Dendritic cell treated with granulocyte-macrophage colony-stimulating factor and Interleukin-4, amounts not matched to agents 40 ng/mL and 50 ng/mL, for 4 days (primary cell): ENCODE measurements at regions of chr19 and their contacts with region 1.

Region 1: DNA sequence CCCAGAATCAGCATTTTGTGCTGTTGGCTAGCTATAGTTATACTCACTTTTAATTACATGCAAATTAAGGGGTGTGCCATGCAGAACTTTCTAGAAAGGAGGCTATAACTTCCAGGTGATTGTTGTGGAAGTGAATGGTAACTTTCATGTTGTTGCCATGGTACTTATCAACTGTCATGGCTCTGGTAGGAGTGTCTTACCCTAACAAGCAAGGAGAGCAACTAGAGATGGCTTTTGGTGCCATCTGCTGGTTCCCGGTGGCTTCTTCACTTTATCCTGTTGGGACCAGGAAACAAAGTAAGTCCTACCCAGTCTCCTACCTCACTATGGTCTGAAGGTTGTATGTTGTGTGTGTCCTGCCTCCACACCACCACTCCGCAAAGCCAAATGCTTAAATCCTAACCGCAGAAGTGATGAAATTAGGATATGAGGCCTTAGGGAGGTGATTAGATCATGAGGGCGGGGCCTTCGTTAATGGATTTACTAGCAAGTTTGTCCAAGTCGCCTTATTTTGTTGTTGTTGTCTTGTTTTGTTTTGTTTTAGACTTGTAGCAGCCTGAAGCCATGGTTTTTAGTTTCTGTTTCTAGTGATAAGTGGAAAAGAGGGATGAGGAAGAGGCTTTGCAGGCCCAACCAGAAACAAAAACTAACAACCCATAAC is 22.6 kb downstream of the FBXL12 start:
- H3K4me3 Mint-ChIP-seq: no peak overlapping the region
- H3K27ac Mint-ChIP-seq: peak overlapping the region; percentile 72
- H3K4me1 Mint-ChIP-seq: peaks cover 17% of the 10 kb centered on the region
- H3K27me3 Mint-ChIP-seq: no peaks in the 10 kb centered on the region

Region 2: GRCh38 chr19:9140159-9140874 is 655.9 kb before region 1 on chr19 and contains the start of gene ZNF317:
- intact Hi-C with region 1: loop called (anchors 5 kb)
- H3K4me3 Mint-ChIP-seq: peak within 1 kb of the TSS; percentile 98
- H3K27ac Mint-ChIP-seq: peak within 1 kb of the TSS; percentile 92
- H3K4me1 Mint-ChIP-seq: peaks cover 38% of the 10 kb centered on the region
- H3K27me3 Mint-ChIP-seq: peaks cover 5% of the 10 kb centered on the region

Region 3: GRCh38 chr19:9205501-9206113 is 590.6 kb before region 1 on chr19:
- intact Hi-C with region 1: loop called (anchors 10 kb)
- H3K4me3 Mint-ChIP-seq: peak overlapping the region; percentile 46
- H3K27ac Mint-ChIP-seq: peak overlapping the region; percentile 22
- H3K4me1 Mint-ChIP-seq: peaks cover 18% of the 10 kb centered on the region
- H3K27me3 Mint-ChIP-seq: peaks cover 33% of the 10 kb centered on the region

Region 4: GRCh38 chr19:9309139-9309973 is 486.9 kb before region 1 on chr19 and contains the start of gene ZNF699:
- intact Hi-C with region 1: loop called (anchors 5 kb)
- H3K4me3 Mint-ChIP-seq: peak within 1 kb of the TSS; percentile 92
- H3K27ac Mint-ChIP-seq: peak within 1 kb of the TSS; percentile 98
- H3K4me1 Mint-ChIP-seq: peaks cover 22% of the 10 kb centered on the region
- H3K27me3 Mint-ChIP-seq: peaks cover 2% of the 10 kb centered on the region

Region 5: GRCh38 chr19:9584073-9584833 is 212.0 kb before region 1 on chr19 and contains the start of gene ZNF121:
- intact Hi-C with region 1: loop called (anchors 2 kb)
- H3K4me3 Mint-ChIP-seq: peak within 1 kb of the TSS; percentile 93
- H3K27ac Mint-ChIP-seq: peak within 1 kb of the TSS; percentile 98
- H3K4me1 Mint-ChIP-seq: peaks cover 18% of the 10 kb centered on the region
- H3K27me3 Mint-ChIP-seq: peaks cover 11% of the 10 kb centered on the region

Region 6: GRCh38 chr19:9785367-9786331 is 10.6 kb before region 1 on chr19:
- intact Hi-C with region 1: loop called (anchors 1 kb)
- H3K4me3 Mint-ChIP-seq: peak overlapping the region; percentile 80
- H3K27ac Mint-ChIP-seq: peak overlapping the region; percentile 96
- H3K4me1 Mint-ChIP-seq: peaks cover 40% of the 10 kb centered on the region
- H3K27me3 Mint-ChIP-seq: no peaks in the 10 kb centered on the region

Region 7: GRCh38 chr19:9818734-9819589 is 22.7 kb after region 1 on chr19 and contains the start of gene FBXL12:
- intact Hi-C with region 1: loop called (anchors 2 kb)
- H3K4me3 Mint-ChIP-seq: peak within 1 kb of the TSS; percentile 94
- H3K27ac Mint-ChIP-seq: peak within 1 kb of the TSS; percentile 97
- H3K4me1 Mint-ChIP-seq: peaks cover 30% of the 10 kb centered on the region
- H3K27me3 Mint-ChIP-seq: no peaks in the 10 kb centered on the region